ENCODE measurements at regions of chr20 and their contacts with region 1.

Region 1: GRCh38 chr20:32445539-32446273 is 87.6 kb downstream of the ASXL1 start:
- DNase-seq: peak in 4 of 14 experiments; percentile 0 to 31 (median 22)
- ATAC-seq: no peak
- H3K4me3 ChIP-seq: no peak overlapping the region
- H3K4me3 Mint-ChIP-seq: no peak overlapping the region
- H3K27ac ChIP-seq: no peak overlapping the region
- H3K27ac Mint-ChIP-seq: peak overlapping the region; percentile 65
- H3K4me1 ChIP-seq: peaks cover 15% of the 10 kb centered on the region
- H3K4me1 Mint-ChIP-seq: peaks cover 28% of the 10 kb centered on the region
- H3K27me3 ChIP-seq: no peaks in the 10 kb centered on the region
- H3K27me3 Mint-ChIP-seq: no peaks in the 10 kb centered on the region
- CTCF ChIP-seq: no peak

Region 2: DNA sequence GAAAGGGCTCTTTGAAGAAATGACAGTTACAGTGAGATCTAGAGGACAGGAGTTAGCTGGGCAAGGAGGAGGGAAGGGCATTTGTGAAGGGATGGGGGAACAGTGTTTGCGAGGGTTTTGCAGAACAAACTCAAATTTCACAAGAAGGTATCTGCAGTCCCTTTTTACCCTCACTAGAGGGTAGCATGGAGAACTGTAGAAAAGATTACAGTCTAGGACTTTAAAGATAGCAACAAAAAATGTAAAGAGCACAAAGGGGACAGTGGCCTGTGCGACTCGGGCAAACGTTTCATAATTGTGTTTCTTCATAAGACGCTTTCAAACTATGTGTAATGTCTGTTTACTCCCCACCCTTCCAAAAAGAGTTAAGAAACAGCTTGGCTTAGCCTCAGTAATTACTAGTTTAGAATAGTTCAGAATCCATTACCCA is 108.8 kb before region 1 on chr20:
- CTCF ChIA-PET with region 1: no interaction called
- POLR2A ChIA-PET with region 1: no interaction called
- intact Hi-C with region 1: loop called in 1 of 2 experiments (anchors 2 kb)
- DNase-seq: peak in 3 of 14 experiments; percentile 35 to 53 (median 53)
- ATAC-seq: peak; percentile 73
- H3K4me3 ChIP-seq: no peak overlapping the region
- H3K4me3 Mint-ChIP-seq: no peak overlapping the region
- H3K27ac ChIP-seq: no peak overlapping the region
- H3K27ac Mint-ChIP-seq: peak overlapping the region; percentile 1
- H3K4me1 ChIP-seq: peaks cover 26% of the 10 kb centered on the region
- H3K4me1 Mint-ChIP-seq: peaks cover 22% of the 10 kb centered on the region
- H3K27me3 ChIP-seq: no peaks in the 10 kb centered on the region
- H3K27me3 Mint-ChIP-seq: no peaks in the 10 kb centered on the region
- CTCF ChIP-seq: peak; percentile 64

Region 3: GRCh38 chr20:32509639-32510066 is 63.9 kb after region 1 on chr20:
- CTCF ChIA-PET with region 1: no interaction called
- POLR2A ChIA-PET with region 1: interaction called, 3 read pairs
- intact Hi-C with region 1: loop called in 1 of 2 experiments (anchors 5 kb)
- DNase-seq: peak; percentile 51 to 89 (median 67)
- ATAC-seq: peak; percentile 83
- H3K4me3 ChIP-seq: peak overlapping the region; percentile 60
- H3K4me3 Mint-ChIP-seq: peak overlapping the region; percentile 88
- H3K27ac ChIP-seq: peak overlapping the region; percentile 75 to 83
- H3K27ac Mint-ChIP-seq: peak overlapping the region; percentile 96
- H3K4me1 ChIP-seq: peaks cover 85% of the 10 kb centered on the region
- H3K4me1 Mint-ChIP-seq: peaks cover 83% of the 10 kb centered on the region
- H3K27me3 ChIP-seq: no peaks in the 10 kb centered on the region
- H3K27me3 Mint-ChIP-seq: no peaks in the 10 kb centered on the region
- CTCF ChIP-seq: peak; percentile 17

Measured in CD4-positive, alpha-beta T cell (primary cell).